Lower leg skin (tissue), 4 donors: ENCODE measurements at regions of chr2 and their contacts with region 1.

Region 1: DNA sequence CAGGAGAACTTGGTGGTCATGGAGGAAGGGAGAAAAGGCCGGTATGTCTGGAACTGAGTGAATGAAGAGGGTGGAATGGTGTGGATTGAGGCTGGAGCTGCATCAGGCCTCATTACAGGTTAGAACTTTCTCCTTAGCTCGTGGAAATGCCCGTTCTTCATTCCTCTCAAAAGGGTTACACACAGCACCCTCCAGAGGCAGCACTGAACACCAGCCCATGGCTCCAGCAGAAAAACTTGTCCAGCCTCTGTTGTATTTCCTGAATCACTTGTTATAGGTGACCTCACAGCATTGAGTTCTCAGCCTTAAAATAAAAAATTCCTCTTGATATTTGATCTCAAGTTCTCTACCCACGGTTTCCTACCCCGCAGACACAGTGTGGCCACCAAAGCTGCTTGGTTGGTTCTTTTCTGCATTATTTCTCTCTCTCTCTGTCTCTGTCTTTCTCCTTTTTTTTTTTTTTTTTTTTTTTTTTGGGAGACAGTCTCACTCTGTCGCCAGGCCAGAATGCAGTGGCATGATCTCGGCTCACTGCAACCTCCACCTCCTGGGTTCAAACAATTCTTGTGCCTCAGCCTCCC is 89.6 kb downstream of the ITGB1BP1 start:
- DNase-seq: peak; percentile 58 to 88
- H3K4me3 ChIP-seq: no peak overlapping the region
- CTCF ChIP-seq: no peak
- POLR2A ChIP-seq: no peak

Region 2: GRCh38 chr2:9142551-9143263 is 191.0 kb before region 1 on chr2:
- intact Hi-C with region 1: loop called (anchors 2 kb)
- DNase-seq: peak; percentile 84 to 98
- H3K4me3 ChIP-seq: no peak overlapping the region
- CTCF ChIP-seq: peak in 2 of 3 donors; percentile 93 to 95
- POLR2A ChIP-seq: no peak

Region 3: DNA sequence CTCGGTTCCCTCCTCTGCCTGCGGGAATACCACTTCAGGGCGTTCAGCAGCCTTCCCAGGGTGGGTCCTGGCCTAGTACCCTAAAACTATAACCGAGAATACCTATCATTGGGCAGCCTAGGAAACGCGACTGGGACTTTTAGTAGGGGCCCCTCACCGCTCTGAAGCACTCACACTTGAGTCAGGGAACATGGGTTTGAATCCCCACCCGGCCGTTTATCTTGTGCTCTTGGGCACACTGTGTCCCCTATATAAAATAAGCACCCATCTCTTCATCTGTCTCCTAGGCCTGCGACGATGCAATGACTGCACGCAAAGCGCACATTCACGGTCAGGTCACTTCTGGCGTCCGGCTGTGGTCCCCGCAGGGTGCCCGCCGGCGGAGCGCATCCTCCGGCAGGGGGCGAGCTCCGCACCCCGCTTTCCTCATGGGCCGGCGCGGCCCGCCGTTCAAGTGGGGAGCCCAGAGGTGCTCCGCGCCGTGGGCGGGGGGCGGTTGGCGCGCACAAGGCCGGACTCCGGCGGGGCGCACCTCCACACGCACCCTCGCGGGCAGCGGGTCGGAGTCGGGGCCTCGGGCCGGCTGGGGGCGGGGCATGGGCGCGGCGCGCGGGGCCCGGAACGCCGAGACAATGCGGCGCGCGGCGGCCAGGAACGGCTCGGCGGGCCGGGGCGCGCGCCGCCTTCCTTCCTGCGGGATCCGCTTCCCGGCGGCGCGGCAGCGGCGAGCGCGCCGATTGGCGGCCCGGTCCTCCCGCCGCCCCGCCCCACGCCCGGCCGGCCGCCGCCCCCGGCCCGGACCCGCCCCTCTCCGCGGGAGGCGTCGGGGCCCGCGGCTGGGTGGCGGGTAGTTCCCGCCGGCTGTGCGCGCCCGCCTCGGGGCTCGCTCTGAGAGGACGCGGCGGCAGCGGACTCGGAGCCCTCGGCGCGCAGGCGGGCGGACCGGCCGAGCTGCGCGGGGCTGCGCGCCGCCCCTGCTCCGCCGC is 127.4 kb before region 1 on chr2 and contains the start of gene ASAP2:
- intact Hi-C with region 1: loop called (anchors 10 kb)
- DNase-seq: peak in 1 of 2 donors; percentile 94
- H3K4me3 ChIP-seq: peak within 1 kb of the TSS; percentile 74
- CTCF ChIP-seq: peak in 1 of 3 donors; percentile 11
- POLR2A ChIP-seq: no peak
- total RNA-seq, gene ASAP2: 30.4 to 40.7 (median 33.1) TPM

Region 4: GRCh38 chr2:9423100-9423921 is 89.6 kb after region 1 on chr2 and contains the starts of genes CPSF3 and ITGB1BP1:
- intact Hi-C with region 1: no loop called
- DNase-seq: peak; percentile 96 to 99
- H3K4me3 ChIP-seq: peak within 1 kb of the TSS; percentile 89
- CTCF ChIP-seq: peak in 1 of 3 donors; percentile 39
- POLR2A ChIP-seq: no peak
- total RNA-seq, gene CPSF3: 23.0 to 34.1 (median 26.2) TPM
- total RNA-seq, gene ITGB1BP1: 22.4 to 30.1 (median 26.5) TPM